Cardiac septum (tissue), 1 donor: ENCODE measurements at regions of chr6 and their contacts with region 1.

Region 1: GRCh38 chr6:43506667-43507471 is 3.3 kb downstream of the LRRC73 start:
- DNase-seq: peak; percentile 89

Region 2: GRCh38 chr6:43269273-43270007 is 237.4 kb before region 1 on chr6:
- intact Hi-C with region 1: loop called (anchors 5 kb)
- DNase-seq: no peak

Region 3: GRCh38 chr6:43386492-43386891 is 120.4 kb before region 1 on chr6:
- intact Hi-C with region 1: loop called (anchors 2 kb)
- DNase-seq: no peak